ENCODE measurements at regions of chr1 and their contacts with region 1.

Region 1: GRCh38 chr1:150293433-150294168 is at the start of gene MRPS21:
- DNase-seq: peak; percentile 97
- H3K4me3 Mint-ChIP-seq: peak within 1 kb of the TSS; percentile 94
- H3K27ac Mint-ChIP-seq: peak within 1 kb of the TSS; percentile 97
- H3K4me1 Mint-ChIP-seq: peaks cover 26% of the 10 kb centered on the region
- H3K27me3 Mint-ChIP-seq: no peaks in the 10 kb centered on the region
- total RNA-seq, gene MRPS21: 80.8 and 87.3 TPM in 2 replicates

Region 2: GRCh38 chr1:150268705-150269403 is 24.7 kb before region 1 on chr1 and contains the start of gene APH1A:
- intact Hi-C with region 1: loop called (anchors 1 kb)
- DNase-seq: peak; percentile 98
- H3K4me3 Mint-ChIP-seq: peak within 1 kb of the TSS; percentile 98
- H3K27ac Mint-ChIP-seq: peak within 1 kb of the TSS; percentile 96
- H3K4me1 Mint-ChIP-seq: peaks cover 31% of the 10 kb centered on the region
- H3K27me3 Mint-ChIP-seq: no peaks in the 10 kb centered on the region
- total RNA-seq, gene APH1A: 101 and 105 TPM in 2 replicates

Region 3: GRCh38 chr1:150281837-150282653 is 11.6 kb before region 1 on chr1 and contains the start of gene CIART:
- intact Hi-C with region 1: loop called (anchors 1 kb)
- DNase-seq: peak; percentile 92
- H3K4me3 Mint-ChIP-seq: peak within 1 kb of the TSS; percentile 85
- H3K27ac Mint-ChIP-seq: peak within 1 kb of the TSS; percentile 87
- H3K4me1 Mint-ChIP-seq: peaks cover 23% of the 10 kb centered on the region
- H3K27me3 Mint-ChIP-seq: peaks cover 6% of the 10 kb centered on the region
- total RNA-seq, gene CIART: 6.0 and 7.5 TPM in 2 replicates

Region 4: GRCh38 chr1:150321826-150322166 is 28.2 kb after region 1 on chr1:
- intact Hi-C with region 1: loop called (anchors 1 kb)
- DNase-seq: peak; percentile 65
- H3K4me3 Mint-ChIP-seq: peak overlapping the region; percentile 99
- H3K27ac Mint-ChIP-seq: peak overlapping the region; percentile 99
- H3K4me1 Mint-ChIP-seq: peaks cover 12% of the 10 kb centered on the region
- H3K27me3 Mint-ChIP-seq: peaks cover 2% of the 10 kb centered on the region

Region 5: GRCh38 chr1:150363426-150364230 is 70.0 kb after region 1 on chr1 and contains the start of gene RPRD2:
- intact Hi-C with region 1: loop called (anchors 2 kb)
- DNase-seq: peak; percentile 100
- H3K4me3 Mint-ChIP-seq: peak within 1 kb of the TSS; percentile 89
- H3K27ac Mint-ChIP-seq: peak within 1 kb of the TSS; percentile 93
- H3K4me1 Mint-ChIP-seq: peaks cover 25% of the 10 kb centered on the region
- H3K27me3 Mint-ChIP-seq: peaks cover 2% of the 10 kb centered on the region
- total RNA-seq, gene RPRD2: 23.7 and 24.6 TPM in 2 replicates